ENCODE measurements at regions of chr1 and their contacts with region 1.

Region 1: DNA sequence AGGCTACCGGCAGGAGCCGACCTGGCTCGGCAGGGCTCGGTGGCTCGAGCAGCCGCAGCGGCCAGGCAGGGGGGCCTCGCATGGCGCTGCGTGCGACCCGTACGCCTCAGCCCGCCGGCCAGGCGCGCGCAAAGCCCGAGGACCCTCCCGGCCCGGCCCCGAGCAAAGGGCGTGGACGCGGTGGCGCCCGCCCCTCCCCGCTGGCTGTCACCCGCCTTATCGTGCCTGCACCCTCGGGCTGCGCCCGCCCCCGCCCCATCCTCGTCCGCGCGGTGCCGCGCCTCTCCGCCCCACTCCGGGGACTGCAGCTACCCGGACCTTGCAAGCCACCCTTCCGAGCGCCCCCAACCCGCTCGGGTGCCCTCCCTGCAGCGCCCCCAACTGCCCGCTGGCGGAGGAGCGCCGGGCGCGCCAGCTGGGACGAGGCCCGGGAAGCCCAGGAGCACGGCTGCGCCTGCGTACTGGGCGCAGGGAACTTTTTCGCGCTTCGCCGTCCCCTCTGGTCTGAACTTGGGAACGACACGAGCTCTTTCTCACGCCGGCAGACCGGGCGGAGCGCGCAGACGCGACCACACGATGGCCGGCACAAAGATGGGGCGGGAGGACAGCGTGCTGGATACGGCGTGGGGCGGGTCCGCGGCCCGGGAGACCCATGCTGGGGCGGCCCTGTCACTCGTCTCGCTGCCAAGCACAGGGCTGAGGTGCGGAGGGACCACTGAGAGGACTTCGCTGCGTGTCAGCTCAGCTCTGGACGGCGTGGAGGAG is at the start of gene ABCB10:
- DNase-seq: peak; percentile 96
- ATAC-seq: peak; percentile 93 to 97 (median 96)
- H3K4me3 ChIP-seq: peak within 1 kb of the TSS; percentile 76 to 96 (median 83)
- H3K27ac ChIP-seq: peak within 1 kb of the TSS; percentile 73 to 99 (median 92)
- H3K4me1 ChIP-seq: peaks cover 0 to 51% (median 38%) of the 10 kb centered on the region in 9 donors
- H3K27me3 ChIP-seq: no peaks in the 10 kb centered on the region
- CTCF ChIP-seq: peak; percentile 45 to 93 (median 85)
- total RNA-seq, gene ABCB10: 8.9 to 13.5 (median 11.9) TPM

Region 2: DNA sequence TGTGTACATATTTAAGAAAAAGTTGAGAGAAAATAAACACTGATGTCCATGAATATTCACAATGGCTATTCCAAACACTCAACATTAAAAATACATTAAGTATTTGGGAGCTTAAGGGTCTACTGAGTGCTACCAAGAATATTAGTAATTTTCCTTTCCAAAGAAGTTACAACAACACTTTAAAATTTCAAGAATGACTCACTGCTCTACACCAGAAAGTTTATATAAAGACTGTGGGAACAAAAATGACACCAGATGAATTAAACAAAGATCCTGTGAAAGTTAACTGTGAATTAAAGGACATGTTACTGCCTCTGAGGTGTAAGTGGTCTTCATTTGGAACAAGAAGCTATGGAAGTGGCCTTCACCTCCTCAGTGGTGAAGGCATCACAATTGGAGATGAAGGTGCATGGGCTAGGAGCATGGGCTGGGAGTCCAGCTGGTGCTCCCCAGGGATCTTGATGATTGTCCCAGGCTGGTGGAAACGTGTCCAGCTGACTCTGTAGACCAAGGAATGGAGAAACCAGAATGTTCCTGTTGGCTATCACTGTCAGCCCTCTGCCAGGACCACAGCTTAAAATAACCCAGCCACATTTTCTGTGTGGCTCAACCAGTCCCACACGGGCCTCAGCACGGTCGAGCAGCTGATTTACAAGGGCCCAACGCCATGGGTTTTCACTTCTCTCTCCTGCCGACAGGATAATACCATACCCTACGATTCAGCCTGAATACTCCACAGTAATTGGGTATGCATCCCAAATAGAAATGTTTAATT is 38.4 kb after region 1 on chr1:
- intact Hi-C with region 1: loop called in 2 of 10 experiments (anchors 2 to 5 kb)
- DNase-seq: peak; percentile 47 to 72
- ATAC-seq: peak; percentile 85 to 96 (median 93)
- H3K4me3 ChIP-seq: peak overlapping the region in 1 of 10 donors; percentile 6
- H3K27ac ChIP-seq: peak overlapping the region; percentile 55 to 88 (median 81)
- H3K4me1 ChIP-seq: peaks cover 2 to 50% (median 35%) of the 10 kb centered on the region in 9 donors
- H3K27me3 ChIP-seq: no peaks in the 10 kb centered on the region
- CTCF ChIP-seq: peak in 2 of 9 donors; percentile 27 to 30

Region 3: GRCh38 chr1:229620876-229621275 is 62.1 kb after region 1 on chr1:
- intact Hi-C with region 1: loop called (anchors 1 to 10 kb)
- DNase-seq: no peak
- ATAC-seq: peak in 2 of 8 donors; percentile 53 to 62
- H3K4me3 ChIP-seq: no peak overlapping the region
- H3K27ac ChIP-seq: no peak overlapping the region
- H3K4me1 ChIP-seq: peaks cover 11 to 77% (median 34%) of the 10 kb centered on the region in 9 donors
- H3K27me3 ChIP-seq: no peaks in the 10 kb centered on the region
- CTCF ChIP-seq: no peak

Region 4: DNA sequence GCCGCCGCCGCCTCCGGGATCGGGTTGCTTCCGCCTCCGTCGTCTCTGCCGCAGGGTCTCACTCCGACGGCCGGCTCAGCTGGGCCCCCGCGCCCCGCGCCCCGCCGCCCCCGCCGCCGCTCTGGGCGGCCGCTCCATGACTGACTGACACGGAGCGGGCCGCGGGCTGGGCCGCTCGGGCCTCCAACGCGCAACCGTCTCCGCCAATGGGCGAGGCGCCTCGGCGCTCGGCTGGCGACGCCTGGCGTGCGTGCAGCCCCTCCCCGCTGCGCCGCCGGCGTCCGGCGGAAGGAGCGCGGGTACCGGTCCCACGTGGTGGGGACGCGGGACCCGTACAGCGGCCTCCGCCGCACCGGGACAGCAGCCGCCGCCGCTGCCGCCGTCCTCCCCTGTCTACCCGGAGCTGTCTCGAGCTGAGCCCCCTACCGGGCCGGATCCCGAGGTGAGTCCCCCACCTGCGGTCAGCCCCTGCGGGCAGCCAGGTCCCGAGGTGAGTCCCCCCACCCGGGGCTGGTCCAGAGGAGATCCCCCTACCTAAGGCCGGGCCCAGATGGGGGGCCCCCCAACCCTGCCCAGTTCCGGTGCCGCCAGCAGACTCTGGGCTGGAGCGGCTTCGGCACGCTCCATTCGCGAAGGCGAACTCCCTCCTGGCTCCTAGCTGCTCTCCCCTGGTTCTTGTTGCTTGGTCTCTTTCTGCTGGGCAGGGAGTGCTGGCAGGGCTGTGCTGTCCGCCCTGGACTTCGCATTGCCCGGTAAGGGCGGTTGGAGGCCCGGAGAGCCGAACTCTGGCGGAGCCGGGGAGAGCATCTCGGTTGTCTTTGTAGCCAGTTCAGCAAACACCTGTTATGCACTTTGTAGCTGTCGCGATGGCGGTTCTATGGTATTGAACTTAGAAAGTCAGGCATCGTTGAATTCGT is 67.4 kb after region 1 on chr1 and contains the starts of genes TAF5L and URB2:
- intact Hi-C with region 1: loop called (anchors 1 to 10 kb)
- DNase-seq: peak; percentile 84 to 88
- ATAC-seq: peak; percentile 96 to 99 (median 98)
- H3K4me3 ChIP-seq: peak within 1 kb of the TSS; percentile 70 to 99 (median 94)
- H3K27ac ChIP-seq: peak within 1 kb of the TSS; percentile 85 to 95 (median 92)
- H3K4me1 ChIP-seq: peaks cover 10 to 57% (median 38%) of the 10 kb centered on the region in 9 donors
- H3K27me3 ChIP-seq: no peaks in the 10 kb centered on the region
- CTCF ChIP-seq: no peak
- total RNA-seq, gene TAF5L: 9.7 to 13.7 (median 11.2) TPM
- total RNA-seq, gene URB2: 2.9 to 5.6 (median 4.4) TPM

Region 5: DNA sequence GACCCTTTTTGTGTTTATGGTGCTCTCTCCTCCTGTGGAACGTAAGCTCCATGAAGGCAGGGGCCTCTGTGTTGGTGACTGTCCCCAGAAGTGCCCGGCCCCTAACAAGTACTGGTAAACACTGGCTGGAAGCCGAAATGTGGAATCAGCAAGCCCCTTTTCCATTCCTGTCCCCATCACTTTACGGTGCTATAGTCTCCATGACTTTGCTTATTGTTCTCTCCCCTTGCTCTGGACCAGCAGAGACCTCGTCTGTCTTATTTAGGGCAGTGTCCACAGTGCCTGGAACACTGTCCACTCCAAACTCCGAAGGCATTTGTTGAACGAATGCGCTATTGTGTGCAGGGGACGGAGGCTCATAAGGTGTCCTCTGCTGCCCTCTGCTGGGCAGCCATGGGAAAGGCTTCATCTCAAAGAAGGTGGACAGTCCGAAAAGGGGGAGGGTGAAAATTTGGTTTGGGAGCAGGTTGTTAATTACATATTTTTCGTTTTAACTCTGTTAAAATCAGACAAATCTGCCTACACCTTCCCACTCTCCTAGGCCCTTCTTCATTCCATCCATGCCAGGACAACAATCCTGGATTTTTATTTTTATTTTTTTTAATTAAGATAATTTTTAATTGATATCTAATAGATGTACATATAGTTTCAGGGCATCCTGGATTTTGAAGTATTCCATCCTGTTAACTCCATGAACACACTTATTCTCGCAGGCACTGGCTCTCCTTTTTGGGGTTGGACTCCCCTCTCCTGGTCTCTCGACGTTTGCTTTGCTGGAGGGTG is 751.8 kb after region 1 on chr1:
- intact Hi-C with region 1: loop called in 1 of 10 experiments (anchors 10 kb)
- DNase-seq: peak; percentile 72 to 74
- ATAC-seq: peak; percentile 82 to 94 (median 89)
- H3K4me3 ChIP-seq: no peak overlapping the region
- H3K27ac ChIP-seq: no peak overlapping the region
- H3K4me1 ChIP-seq: peaks cover 0 to 19% (median 8%) of the 10 kb centered on the region in 9 donors
- H3K27me3 ChIP-seq: peaks cover 0 to 18% (median 0%) of the 10 kb centered on the region in 7 donors
- CTCF ChIP-seq: peak; percentile 87 to 97 (median 95)